Naive thymus-derived CD4-positive, alpha-beta T cell (primary cell): ENCODE measurements at regions of chr1 and their contacts with region 1.

Region 1: GRCh38 chr1:173867753-173868265 is at the start of gene GAS5:
- DNase-seq: peak; percentile 88 to 100 (median 99)
- ATAC-seq: peak; percentile 92
- H3K4me3 ChIP-seq: peak within 1 kb of the TSS; percentile 88
- H3K4me3 Mint-ChIP-seq: peak within 1 kb of the TSS; percentile 92 to 98 (median 95)
- H3K27ac ChIP-seq: peak within 1 kb of the TSS; percentile 93
- H3K27ac Mint-ChIP-seq: peak within 1 kb of the TSS; percentile 85 to 99 (median 97)
- H3K4me1 ChIP-seq: peaks cover 42 to 62% of the 10 kb centered on the region in 2 donors
- H3K4me1 Mint-ChIP-seq: peaks cover 50 to 80% (median 66%) of the 10 kb centered on the region in 7 donors
- H3K27me3 ChIP-seq: no peaks in the 10 kb centered on the region
- H3K27me3 Mint-ChIP-seq: peaks cover 0 to 4% (median 0%) of the 10 kb centered on the region in 5 donors
- total RNA-seq, gene GAS5: 371 to 954 (median 885) TPM

Region 2: GRCh38 chr1:173420330-173420806 is 447.4 kb before region 1 on chr1:
- CTCF ChIA-PET with region 1: interaction called, 3 read pairs
- POLR2A ChIA-PET with region 1: no interaction called
- intact Hi-C with region 1: loop called in 1 of 2 experiments (anchors 1 kb)
- DNase-seq: peak; percentile 25 to 71 (median 59)
- ATAC-seq: peak; percentile 83
- H3K4me3 ChIP-seq: no peak overlapping the region
- H3K4me3 Mint-ChIP-seq: peak overlapping the region in 2 of 10 donors; percentile 29 to 38
- H3K27ac ChIP-seq: no peak overlapping the region
- H3K27ac Mint-ChIP-seq: peak overlapping the region in 1 of 9 donors; percentile 20
- H3K4me1 ChIP-seq: no peaks in the 10 kb centered on the region
- H3K4me1 Mint-ChIP-seq: peaks cover 4 to 10% (median 6%) of the 10 kb centered on the region in 7 donors
- H3K27me3 ChIP-seq: no peaks in the 10 kb centered on the region
- H3K27me3 Mint-ChIP-seq: no peaks in the 10 kb centered on the region

Region 3: GRCh38 chr1:173714759-173715537 is 152.9 kb before region 1 on chr1 and contains the start of gene KLHL20:
- CTCF ChIA-PET with region 1: interaction called, 4 read pairs
- POLR2A ChIA-PET with region 1: interaction called, 25 read pairs
- intact Hi-C with region 1: loop called (anchors 1 kb)
- DNase-seq: peak; percentile 60 to 92 (median 89)
- ATAC-seq: peak; percentile 98
- H3K4me3 ChIP-seq: peak within 1 kb of the TSS; percentile 77
- H3K4me3 Mint-ChIP-seq: peak within 1 kb of the TSS; percentile 90 to 100 (median 96)
- H3K27ac ChIP-seq: peak within 1 kb of the TSS; percentile 78
- H3K27ac Mint-ChIP-seq: peak within 1 kb of the TSS; percentile 89 to 99 (median 94)
- H3K4me1 ChIP-seq: peaks cover 11 to 18% of the 10 kb centered on the region in 2 donors
- H3K4me1 Mint-ChIP-seq: peaks cover 14 to 48% (median 35%) of the 10 kb centered on the region in 7 donors
- H3K27me3 ChIP-seq: no peaks in the 10 kb centered on the region
- H3K27me3 Mint-ChIP-seq: peaks cover 14 to 32% (median 19%) of the 10 kb centered on the region in 5 donors
- total RNA-seq, gene KLHL20: 28.3 to 40.9 (median 32.8) TPM

Region 4: DNA sequence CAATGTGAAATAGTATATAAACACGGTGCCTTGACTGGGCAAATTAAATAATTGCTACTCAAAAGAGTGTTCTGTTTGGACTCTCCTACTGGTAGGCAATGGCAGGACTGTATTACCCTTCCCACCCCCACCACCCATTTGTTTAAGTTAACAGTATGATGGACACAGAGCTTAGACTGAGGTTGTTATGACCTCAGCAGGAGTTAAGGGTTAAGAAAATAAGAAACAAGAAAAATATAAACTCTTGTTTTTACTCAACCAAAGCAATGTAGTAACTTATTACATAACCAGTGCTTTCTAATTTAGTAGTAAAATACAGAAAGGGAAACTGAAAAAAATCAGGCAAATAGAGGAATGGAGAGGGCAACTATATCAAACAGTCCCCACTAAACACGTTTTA is 69.3 kb after region 1 on chr1:
- CTCF ChIA-PET with region 1: no interaction called
- POLR2A ChIA-PET with region 1: interaction called, 3 read pairs
- intact Hi-C with region 1: loop called (anchors 5 kb)
- DNase-seq: no peak
- ATAC-seq: no peak
- H3K4me3 ChIP-seq: no peak overlapping the region
- H3K4me3 Mint-ChIP-seq: no peak overlapping the region
- H3K27ac ChIP-seq: no peak overlapping the region
- H3K27ac Mint-ChIP-seq: no peak overlapping the region
- H3K4me1 ChIP-seq: no peaks in the 10 kb centered on the region
- H3K4me1 Mint-ChIP-seq: peaks cover 0 to 4% (median 0%) of the 10 kb centered on the region in 7 donors
- H3K27me3 ChIP-seq: no peaks in the 10 kb centered on the region
- H3K27me3 Mint-ChIP-seq: no peaks in the 10 kb centered on the region

Region 5: DNA sequence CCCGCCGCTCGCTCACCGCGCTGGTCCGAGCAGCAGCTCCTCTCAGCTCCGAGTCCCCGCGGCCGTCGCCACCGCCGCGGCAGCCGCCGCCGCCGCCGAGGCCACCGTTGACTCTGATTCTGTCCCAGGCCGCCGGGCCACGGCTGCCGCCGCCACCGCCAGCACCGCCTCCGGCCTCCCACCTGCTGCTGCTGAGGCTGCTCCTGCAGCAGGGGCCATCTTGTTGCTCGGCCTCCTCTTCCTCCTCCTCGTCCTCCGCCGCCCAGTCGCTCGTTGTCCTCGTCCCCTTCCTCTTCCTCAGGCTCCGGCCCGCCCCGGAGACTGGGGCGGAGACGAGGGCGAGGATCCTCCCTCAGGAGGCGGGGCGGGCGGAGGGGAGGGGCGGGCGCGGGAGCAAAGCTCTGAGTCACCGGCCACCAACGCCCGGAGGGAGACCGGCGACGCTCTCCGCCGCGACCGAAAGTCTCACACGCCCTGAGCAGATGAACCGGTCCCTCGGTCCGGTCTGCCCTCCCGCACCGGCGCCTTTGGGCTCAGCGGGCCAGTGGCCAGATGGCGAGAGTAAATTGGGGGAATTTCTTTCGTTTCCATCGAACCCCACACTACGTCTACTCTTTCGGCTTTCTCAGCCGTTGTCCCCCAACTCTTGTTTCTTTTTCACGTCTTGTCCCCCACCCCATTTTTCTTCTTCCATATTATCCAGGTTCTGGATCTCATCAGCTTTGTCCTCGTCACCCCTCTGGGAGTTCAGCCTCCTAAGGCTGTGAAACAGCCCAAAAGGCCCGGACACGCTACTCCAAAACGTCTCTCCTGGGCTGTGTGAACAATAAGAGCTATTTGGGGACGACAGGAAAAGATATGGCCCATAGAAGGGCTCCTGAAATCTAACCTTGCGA is 154.5 kb after region 1 on chr1 and contains the start of gene RC3H1:
- CTCF ChIA-PET with region 1: no interaction called
- POLR2A ChIA-PET with region 1: interaction called, 21 read pairs
- intact Hi-C with region 1: loop called (anchors 1 kb)
- DNase-seq: peak; percentile 75 to 89 (median 83)
- ATAC-seq: peak; percentile 97
- H3K4me3 ChIP-seq: peak within 1 kb of the TSS; percentile 86
- H3K4me3 Mint-ChIP-seq: peak within 1 kb of the TSS; percentile 85 to 100 (median 98)
- H3K27ac ChIP-seq: peak within 1 kb of the TSS; percentile 94
- H3K27ac Mint-ChIP-seq: peak within 1 kb of the TSS; percentile 90 to 99 (median 98)
- H3K4me1 ChIP-seq: peaks cover 24 to 32% of the 10 kb centered on the region in 2 donors
- H3K4me1 Mint-ChIP-seq: peaks cover 19 to 52% (median 49%) of the 10 kb centered on the region in 7 donors
- H3K27me3 ChIP-seq: no peaks in the 10 kb centered on the region
- H3K27me3 Mint-ChIP-seq: peaks cover 0 to 5% (median 0%) of the 10 kb centered on the region in 5 donors
- total RNA-seq, gene RC3H1: 36.5 to 49.5 (median 47.7) TPM

Region 6: DNA sequence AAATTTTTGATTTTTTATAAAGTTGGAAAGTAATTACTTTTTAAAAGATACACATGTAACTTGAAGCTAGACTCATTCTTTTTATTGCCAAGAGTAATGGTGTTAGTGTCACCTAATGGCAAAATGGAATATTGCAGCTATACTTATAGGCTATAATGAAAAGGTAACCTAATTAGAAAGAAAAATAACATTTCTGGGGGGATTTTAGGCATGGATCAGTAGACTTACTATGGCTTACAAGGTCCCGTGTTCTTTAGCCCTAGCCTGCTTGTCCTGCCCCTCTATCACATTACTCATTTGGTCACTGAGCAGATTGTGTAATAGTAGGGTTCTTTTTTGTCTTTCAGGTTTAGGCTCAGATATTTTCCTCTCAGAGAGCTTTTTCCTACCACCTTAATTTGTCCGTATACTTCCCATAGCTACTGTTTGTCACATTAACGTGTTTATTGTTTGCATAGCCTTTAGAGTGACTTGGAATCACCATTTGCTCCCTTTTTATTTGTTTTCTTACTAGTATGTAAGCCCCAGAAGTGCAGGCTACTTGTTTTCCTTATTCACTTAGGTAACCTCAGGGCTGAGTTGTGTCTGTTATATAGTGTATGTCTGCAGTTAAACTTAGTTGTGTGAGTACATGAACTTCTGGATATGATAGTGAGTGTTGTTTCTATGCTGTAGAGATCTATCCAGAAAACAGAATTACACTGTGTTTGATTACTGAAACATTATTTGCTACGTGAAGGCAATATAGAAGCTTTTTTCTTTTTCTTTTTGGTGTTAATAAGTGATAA is 350.2 kb after region 1 on chr1:
- CTCF ChIA-PET with region 1: interaction called, 3 read pairs
- POLR2A ChIA-PET with region 1: interaction called, 3 read pairs
- intact Hi-C with region 1: loop called in 1 of 2 experiments (anchors 1 kb)
- DNase-seq: peak in 6 of 9 donors; percentile 2 to 46 (median 34)
- ATAC-seq: peak; percentile 69
- H3K4me3 ChIP-seq: no peak overlapping the region
- H3K4me3 Mint-ChIP-seq: no peak overlapping the region
- H3K27ac ChIP-seq: no peak overlapping the region
- H3K27ac Mint-ChIP-seq: no peak overlapping the region
- H3K4me1 ChIP-seq: no peaks in the 10 kb centered on the region
- H3K4me1 Mint-ChIP-seq: peaks cover 0 to 8% (median 0%) of the 10 kb centered on the region in 7 donors
- H3K27me3 ChIP-seq: no peaks in the 10 kb centered on the region
- H3K27me3 Mint-ChIP-seq: no peaks in the 10 kb centered on the region